Endothelial cell of umbilical vein (primary cell): ENCODE measurements at regions of chr3 and their contacts with region 1.

Region 1: DNA sequence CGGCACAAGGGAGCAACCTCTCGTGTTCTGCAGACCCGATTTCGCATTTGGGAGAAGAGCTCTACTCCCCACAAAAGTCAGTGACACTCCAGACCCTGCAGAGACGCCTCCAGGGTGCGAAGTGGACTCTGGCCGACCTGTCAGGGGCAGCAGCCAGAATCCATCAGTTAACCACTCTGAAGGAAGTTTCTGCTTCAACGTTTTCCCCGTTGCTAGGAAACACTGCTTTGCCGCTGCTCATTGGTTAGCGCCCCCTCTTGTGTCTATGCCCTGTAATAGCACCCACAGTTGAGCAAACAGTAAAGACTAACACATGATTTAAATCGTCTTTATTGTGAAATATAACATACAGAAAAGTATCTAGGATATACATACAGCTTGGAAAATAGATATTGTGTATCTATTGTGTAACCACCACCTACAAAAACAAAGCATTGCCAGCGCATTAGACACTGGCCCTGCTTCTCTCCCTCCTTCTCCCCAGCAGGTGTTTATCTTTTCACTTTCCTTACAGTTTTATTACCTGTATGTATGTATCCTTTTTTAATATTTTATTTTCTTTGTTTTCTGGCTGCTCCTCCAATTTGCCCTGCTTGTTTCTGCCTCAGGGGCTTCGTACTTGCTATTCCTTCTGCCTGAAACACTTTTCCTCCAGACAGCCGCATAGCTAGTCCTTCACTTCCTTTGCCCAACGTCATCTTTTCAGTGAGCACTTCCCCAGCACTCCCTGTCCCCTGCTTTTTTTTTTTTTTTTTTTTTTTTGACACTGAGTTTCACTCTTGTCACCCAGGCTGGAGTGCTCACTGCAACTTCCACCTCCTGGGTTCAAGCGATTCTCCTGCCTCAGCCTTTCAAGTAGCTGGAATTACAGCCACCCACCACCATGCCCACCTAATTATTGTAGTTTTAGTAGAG is 38.8 kb downstream of the TMEM40 start:
- DNase-seq: peak; percentile 85
- H3K4me3 ChIP-seq: no peak overlapping the region
- H3K27ac ChIP-seq: no peak overlapping the region
- H3K4me1 ChIP-seq: no peaks in the 10 kb centered on the region
- H3K27me3 ChIP-seq: no peaks in the 10 kb centered on the region
- CTCF ChIP-seq: peak; percentile 82 to 90
- POLR2A ChIP-seq: no peak

Region 2: GRCh38 chr3:12706504-12707253 is 13.6 kb before region 1 on chr3:
- CTCF ChIA-PET with region 1: interaction called, 15 read pairs
- POLR2A ChIA-PET with region 1: no interaction called
- dilution Hi-C with region 1: no loop called
- intact Hi-C with region 1: loop called (anchors 1 kb)
- DNase-seq: peak; percentile 74
- H3K4me3 ChIP-seq: no peak overlapping the region
- H3K27ac ChIP-seq: no peak overlapping the region
- H3K4me1 ChIP-seq: no peaks in the 10 kb centered on the region
- H3K27me3 ChIP-seq: no peaks in the 10 kb centered on the region
- CTCF ChIP-seq: peak; percentile 64 to 78
- POLR2A ChIP-seq: no peak

Region 3: GRCh38 chr3:12901623-12902045 is 181.4 kb after region 1 on chr3:
- CTCF ChIA-PET with region 1: no interaction called
- POLR2A ChIA-PET with region 1: no interaction called
- dilution Hi-C with region 1: no loop called
- intact Hi-C with region 1: no loop called
- DNase-seq: no peak
- H3K4me3 ChIP-seq: no peak overlapping the region
- H3K27ac ChIP-seq: no peak overlapping the region
- H3K4me1 ChIP-seq: no peaks in the 10 kb centered on the region
- H3K27me3 ChIP-seq: no peaks in the 10 kb centered on the region
- CTCF ChIP-seq: no peak
- POLR2A ChIP-seq: no peak